ENCODE measurements at regions of chr3 and their contacts with region 1.

Region 1: DNA sequence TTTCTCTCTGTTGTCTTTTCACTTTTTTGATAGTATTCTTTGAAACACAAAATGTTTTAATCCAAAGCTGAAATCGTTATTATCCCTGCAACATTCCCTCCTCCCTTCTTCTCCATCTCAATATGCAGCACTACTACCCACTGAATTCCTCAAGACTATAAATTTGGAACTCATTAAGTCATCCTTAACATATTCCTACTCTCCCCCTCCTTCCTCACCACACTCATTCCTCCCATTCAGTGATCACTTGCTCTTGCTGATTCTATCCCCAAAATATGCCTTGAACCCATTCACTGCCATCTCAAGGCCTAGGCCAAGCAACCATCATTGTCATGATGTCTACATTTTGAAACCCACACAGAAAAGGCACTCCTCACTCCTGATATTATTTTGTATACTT is 2.4 kb upstream of the PIK3R4 start:
- DNase-seq: no peak
- H3K4me3 ChIP-seq: no peak overlapping the region
- H3K27ac ChIP-seq: no peak overlapping the region
- H3K4me1 ChIP-seq: peaks cover 9% of the 10 kb centered on the region
- H3K27me3 ChIP-seq: no peaks in the 10 kb centered on the region
- CTCF ChIP-seq: no peak

Region 2: DNA sequence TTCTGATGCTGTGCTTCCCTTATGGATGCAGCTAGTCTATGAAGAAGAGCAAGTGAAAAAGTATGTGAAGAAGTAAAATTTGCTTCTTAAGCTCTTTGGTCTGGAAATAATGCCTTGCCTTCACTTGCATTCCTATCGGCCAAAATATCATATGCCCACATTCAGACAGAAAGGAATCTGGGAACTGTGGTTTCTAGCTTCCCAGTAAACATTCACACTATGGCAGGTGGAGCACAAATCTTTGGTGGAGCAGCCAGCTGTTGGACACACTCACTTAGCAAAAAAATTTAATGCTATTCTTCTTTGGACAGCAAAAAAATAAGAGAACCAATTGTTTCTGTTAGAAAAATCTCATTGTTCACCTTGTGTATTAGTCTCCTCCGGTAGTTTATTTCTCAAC is 244.3 kb before region 1 on chr3:
- CTCF ChIA-PET with region 1: no interaction called
- POLR2A ChIA-PET with region 1: interaction called, 13 read pairs
- intact Hi-C with region 1: no loop called
- DNase-seq: no peak
- H3K4me3 ChIP-seq: no peak overlapping the region
- H3K27ac ChIP-seq: no peak overlapping the region
- H3K4me1 ChIP-seq: no peaks in the 10 kb centered on the region
- H3K27me3 ChIP-seq: peaks cover 33% of the 10 kb centered on the region
- CTCF ChIP-seq: no peak

Region 3: GRCh38 chr3:130795396-130795795 is 46.4 kb after region 1 on chr3:
- CTCF ChIA-PET with region 1: no interaction called
- POLR2A ChIA-PET with region 1: no interaction called
- intact Hi-C with region 1: no loop called
- DNase-seq: no peak
- H3K4me3 ChIP-seq: no peak overlapping the region
- H3K27ac ChIP-seq: no peak overlapping the region
- H3K4me1 ChIP-seq: peaks cover 10% of the 10 kb centered on the region
- H3K27me3 ChIP-seq: peaks cover under 1% of the 10 kb centered on the region
- CTCF ChIP-seq: no peak